Psoas muscle (tissue), 8 donors: ENCODE measurements at regions of chr11 and their contacts with region 1.

Region 1: GRCh38 chr11:19577976-19578619 is 134.5 kb upstream of the NAV2 start:
- DNase-seq: peak; percentile 33 to 66
- ATAC-seq: peak; percentile 52 to 86 (median 76)
- H3K4me3 ChIP-seq: no peak overlapping the region
- H3K27ac ChIP-seq: no peak overlapping the region
- H3K4me1 ChIP-seq: peaks cover 26% of the 10 kb centered on the region
- H3K27me3 ChIP-seq: no peaks in the 10 kb centered on the region
- CTCF ChIP-seq: no peak

Region 2: GRCh38 chr11:19727246-19727645 is 149.1 kb after region 1 on chr11:
- intact Hi-C with region 1: loop called in 1 of 2 experiments (anchors 5 kb)
- DNase-seq: peak in 1 of 2 donors; percentile 60
- ATAC-seq: peak in 1 of 4 donors; percentile 38
- H3K4me3 ChIP-seq: no peak overlapping the region
- H3K27ac ChIP-seq: no peak overlapping the region
- H3K4me1 ChIP-seq: no peaks in the 10 kb centered on the region
- H3K27me3 ChIP-seq: no peaks in the 10 kb centered on the region
- CTCF ChIP-seq: no peak